ENCODE measurements at regions of chr3 and their contacts with region 1.

Region 1: GRCh38 chr3:194632809-194633348 is 340 bp downstream of the TMEM44 start:
- DNase-seq: peak; percentile 81

Region 2: DNA sequence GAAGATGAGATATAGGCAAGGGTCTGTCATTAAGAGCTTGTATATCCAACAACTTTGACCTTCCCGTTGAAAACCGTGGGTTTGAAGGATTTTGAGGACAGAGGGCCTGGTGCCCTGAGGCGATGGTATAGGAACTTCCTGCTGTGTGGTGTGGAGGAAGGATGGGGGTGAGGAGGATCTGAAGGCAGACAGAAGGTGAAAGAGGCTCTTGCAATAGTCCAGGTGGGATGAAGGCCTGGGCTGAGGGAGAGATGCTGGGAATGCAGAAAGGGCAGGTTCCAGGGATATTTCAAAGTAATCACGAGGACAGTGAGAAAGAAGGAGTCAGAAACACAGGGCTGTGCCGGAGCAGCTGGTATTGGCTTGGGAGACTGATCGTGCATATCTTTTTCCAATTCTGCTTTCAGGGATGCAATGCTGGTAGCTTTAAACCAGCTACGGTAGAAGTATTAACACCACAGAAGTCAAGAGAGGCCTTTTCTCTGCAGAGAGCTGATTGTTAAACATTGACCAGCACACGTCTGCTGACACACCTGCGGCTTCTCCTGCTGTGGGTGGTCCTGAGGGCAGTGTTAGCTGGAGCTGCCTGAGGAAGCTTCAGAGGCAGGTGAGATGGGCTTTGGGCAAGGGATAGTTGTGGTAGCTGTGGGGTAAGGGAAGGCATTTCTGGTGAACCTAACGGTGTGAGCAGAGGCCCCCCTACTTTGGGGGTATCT is 73.7 kb after region 1 on chr3:
- intact Hi-C with region 1: no loop called
- DNase-seq: no peak

Region 3: DNA sequence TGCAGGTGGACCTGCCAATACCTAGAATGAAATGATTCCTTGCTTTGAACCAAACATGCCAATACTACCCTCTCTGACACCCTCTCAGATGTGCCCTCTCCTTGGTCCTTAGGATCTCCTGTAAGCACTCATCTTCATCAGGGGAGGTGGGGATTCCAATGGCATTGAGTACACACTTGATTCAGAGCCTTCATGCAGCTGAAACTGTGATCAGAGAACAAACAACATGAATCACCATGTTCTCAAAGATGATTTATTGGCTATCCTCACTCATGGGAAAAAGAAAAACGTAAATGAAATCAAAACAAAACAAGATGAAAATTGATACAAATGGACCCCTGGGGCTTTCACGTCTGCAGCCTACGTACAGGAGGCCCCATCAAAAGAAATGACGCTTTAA is 435.2 kb after region 1 on chr3:
- intact Hi-C with region 1: loop called in 1 of 2 experiments (anchors 5 kb)
- DNase-seq: no peak

Region 4: GRCh38 chr3:195307711-195308110 is 674.8 kb after region 1 on chr3:
- intact Hi-C with region 1: no loop called
- DNase-seq: no peak